Activated T-helper 2 cell treated with anti-CD3 and anti-CD28 coated beads, Interferon-gamma antibody, Interleukin-2, Interleukin-4, amounts not matched to agents 10 μg/mL and 5 μg/mL and 100 μg/mL, durations not matched to agents 14 hours and 24 hours and 36 hours (primary cell): ENCODE measurements at regions of chr1 and their contacts with region 1.

Region 1: GRCh38 chr1:66311092-66311491 is 222.9 kb upstream of the SGIP1 start:
- DNase-seq: no peak
- H3K4me3 Mint-ChIP-seq: no peak overlapping the region
- H3K27ac Mint-ChIP-seq: no peak overlapping the region
- H3K4me1 Mint-ChIP-seq: no peaks in the 10 kb centered on the region
- H3K27me3 Mint-ChIP-seq: peaks cover 12% of the 10 kb centered on the region

Region 2: GRCh38 chr1:66262211-66262963 is 48.7 kb before region 1 on chr1:
- intact Hi-C with region 1: no loop called
- DNase-seq: no peak
- H3K4me3 Mint-ChIP-seq: no peak overlapping the region
- H3K27ac Mint-ChIP-seq: no peak overlapping the region
- H3K4me1 Mint-ChIP-seq: peaks cover 47% of the 10 kb centered on the region
- H3K27me3 Mint-ChIP-seq: peaks cover 7% of the 10 kb centered on the region

Region 3: GRCh38 chr1:66323958-66324625 is 13.0 kb after region 1 on chr1:
- intact Hi-C with region 1: loop called (anchors 2 kb)
- DNase-seq: no peak
- H3K4me3 Mint-ChIP-seq: no peak overlapping the region
- H3K27ac Mint-ChIP-seq: no peak overlapping the region
- H3K4me1 Mint-ChIP-seq: peaks cover 22% of the 10 kb centered on the region
- H3K27me3 Mint-ChIP-seq: peaks cover 4% of the 10 kb centered on the region